Activated CD4-positive, alpha-beta memory T cell treated with anti-CD3 and anti-CD28 coated beads, Interleukin-2, amount 10 ng/mL, durations not matched to agents 7 days and 5 days (primary cell): ENCODE measurements at regions of chr1 and their contacts with region 1.

Region 1: DNA sequence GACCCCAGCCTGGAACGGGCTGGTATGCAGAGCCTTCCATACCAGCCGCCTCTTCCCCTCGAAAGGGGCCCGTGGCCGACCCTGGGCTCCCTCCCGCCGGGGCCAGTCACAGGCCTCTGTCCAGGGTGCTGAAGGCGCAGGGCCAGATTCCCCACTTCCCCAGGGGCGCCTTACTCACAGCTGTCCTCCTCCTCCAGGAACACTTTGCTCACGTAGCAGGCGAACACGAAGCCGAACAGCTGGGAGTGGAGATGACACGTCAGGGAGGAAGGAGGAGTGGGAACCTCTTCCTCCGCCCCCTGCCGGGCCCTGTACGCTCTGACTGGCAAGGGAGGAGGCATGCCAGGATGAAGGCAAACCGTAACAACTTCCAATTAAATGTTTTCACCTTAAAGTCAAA is 57.3 kb downstream of the NKAIN1 start:
- DNase-seq: peak; percentile 58
- H3K4me3 Mint-ChIP-seq: no peak overlapping the region
- H3K27ac Mint-ChIP-seq: no peak overlapping the region
- H3K4me1 Mint-ChIP-seq: peaks cover 12% of the 10 kb centered on the region
- H3K27me3 Mint-ChIP-seq: peaks cover 39% of the 10 kb centered on the region

Region 2: GRCh38 chr1:31012210-31012924 is 170.0 kb before region 1 on chr1:
- CTCF ChIA-PET with region 1: no interaction called
- POLR2A ChIA-PET with region 1: no interaction called
- DNase-seq: no peak
- H3K4me3 Mint-ChIP-seq: no peak overlapping the region
- H3K27ac Mint-ChIP-seq: no peak overlapping the region
- H3K4me1 Mint-ChIP-seq: peaks cover 55% of the 10 kb centered on the region
- H3K27me3 Mint-ChIP-seq: no peaks in the 10 kb centered on the region

Region 3: GRCh38 chr1:31127266-31127665 is 55.1 kb before region 1 on chr1:
- CTCF ChIA-PET with region 1: no interaction called
- POLR2A ChIA-PET with region 1: no interaction called
- DNase-seq: no peak
- H3K4me3 Mint-ChIP-seq: no peak overlapping the region
- H3K27ac Mint-ChIP-seq: no peak overlapping the region
- H3K4me1 Mint-ChIP-seq: no peaks in the 10 kb centered on the region
- H3K27me3 Mint-ChIP-seq: peaks cover 3% of the 10 kb centered on the region

Region 4: GRCh38 chr1:31170486-31170735 is 11.9 kb before region 1 on chr1:
- CTCF ChIA-PET with region 1: interaction called, 19 read pairs
- POLR2A ChIA-PET with region 1: interaction called, 3 read pairs
- DNase-seq: no peak
- H3K4me3 Mint-ChIP-seq: no peak overlapping the region
- H3K27ac Mint-ChIP-seq: peak overlapping the region; percentile 55
- H3K4me1 Mint-ChIP-seq: peaks cover 13% of the 10 kb centered on the region
- H3K27me3 Mint-ChIP-seq: peaks cover 8% of the 10 kb centered on the region

Region 5: GRCh38 chr1:31422505-31423319 is 240.4 kb after region 1 on chr1:
- CTCF ChIA-PET with region 1: interaction called, 12 read pairs
- POLR2A ChIA-PET with region 1: no interaction called
- DNase-seq: peak; percentile 71
- H3K4me3 Mint-ChIP-seq: no peak overlapping the region
- H3K27ac Mint-ChIP-seq: no peak overlapping the region
- H3K4me1 Mint-ChIP-seq: peaks cover 9% of the 10 kb centered on the region
- H3K27me3 Mint-ChIP-seq: peaks cover 22% of the 10 kb centered on the region